ENCODE measurements at regions of chr12 and their contacts with region 1.

Region 1: DNA sequence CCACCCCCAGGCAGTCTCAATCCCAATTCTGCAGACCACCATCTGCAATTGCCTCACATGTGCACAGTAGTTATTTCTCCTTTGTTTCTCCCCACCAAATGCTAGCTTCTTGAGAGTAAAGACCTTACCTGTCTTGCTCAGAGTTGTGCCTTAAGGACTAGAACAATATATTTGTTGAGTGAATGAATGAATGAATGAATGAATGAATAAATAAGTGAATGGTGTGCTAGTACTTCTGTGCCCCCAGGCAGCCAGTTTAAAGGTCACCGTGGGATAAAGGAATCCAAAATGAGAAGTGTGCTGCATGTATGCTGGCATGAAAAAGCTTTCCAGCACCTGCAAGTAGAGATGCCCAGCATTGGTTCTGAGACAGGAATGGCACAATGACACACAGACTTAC is 83.0 kb downstream of the CIT start:
- DNase-seq: no peak

Region 2: DNA sequence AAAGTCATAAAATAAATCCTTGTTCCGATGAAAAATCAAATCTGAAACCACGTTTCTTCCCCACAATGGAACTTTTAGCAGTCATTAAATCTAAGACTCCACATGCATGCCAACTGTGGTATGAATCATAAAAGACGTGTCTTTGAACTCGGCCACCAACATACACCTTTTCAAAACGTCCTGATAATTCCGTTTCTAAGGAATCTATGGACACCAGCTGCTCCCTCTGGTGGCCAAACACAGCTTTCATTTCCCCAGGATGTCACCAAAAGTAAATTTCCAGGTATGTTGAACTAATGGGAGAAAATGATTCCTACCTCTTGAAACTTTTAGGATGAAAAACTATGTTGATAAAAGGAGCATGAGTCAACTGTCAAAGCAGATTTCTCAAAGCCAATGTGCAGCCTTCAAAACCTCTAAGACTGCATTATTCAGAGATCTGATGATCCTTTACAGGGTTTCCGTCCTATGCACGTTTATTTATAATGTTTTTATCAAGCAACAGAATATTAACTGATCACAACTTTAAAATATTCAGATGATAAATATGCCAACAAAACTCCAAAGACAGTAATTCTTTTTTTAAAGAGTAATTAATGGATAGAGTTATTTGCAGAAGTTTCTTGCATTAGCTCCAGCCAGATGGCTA is 13.2 kb before region 1 on chr12:
- CTCF ChIA-PET with region 1: interaction called, 10 read pairs
- POLR2A ChIA-PET with region 1: interaction called, 3 read pairs
- DNase-seq: peak; percentile 55

Region 3: DNA sequence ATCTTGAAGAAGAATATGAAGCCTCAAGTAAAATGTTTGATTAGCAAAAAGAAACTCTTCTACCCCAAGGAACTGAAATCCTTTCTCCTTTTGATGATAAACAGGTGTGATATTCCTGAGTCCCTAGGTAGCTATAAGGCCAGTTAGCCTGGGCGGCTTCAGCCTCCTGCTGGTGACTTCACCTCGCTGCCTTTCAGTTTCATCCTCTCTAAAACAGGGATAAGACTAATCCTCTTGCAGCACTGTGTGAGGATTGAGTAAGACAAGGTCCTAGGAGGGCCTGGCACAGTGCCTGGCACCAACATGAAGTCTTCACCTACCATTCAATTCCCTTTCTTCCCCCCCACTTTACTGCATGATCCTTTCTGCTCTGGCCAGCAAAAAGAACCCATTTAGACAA is 41.0 kb after region 1 on chr12:
- CTCF ChIA-PET with region 1: no interaction called
- POLR2A ChIA-PET with region 1: no interaction called
- DNase-seq: no peak